GM23248 (cell line): ENCODE measurements at regions of chr4 and their contacts with region 1.

Region 1: DNA sequence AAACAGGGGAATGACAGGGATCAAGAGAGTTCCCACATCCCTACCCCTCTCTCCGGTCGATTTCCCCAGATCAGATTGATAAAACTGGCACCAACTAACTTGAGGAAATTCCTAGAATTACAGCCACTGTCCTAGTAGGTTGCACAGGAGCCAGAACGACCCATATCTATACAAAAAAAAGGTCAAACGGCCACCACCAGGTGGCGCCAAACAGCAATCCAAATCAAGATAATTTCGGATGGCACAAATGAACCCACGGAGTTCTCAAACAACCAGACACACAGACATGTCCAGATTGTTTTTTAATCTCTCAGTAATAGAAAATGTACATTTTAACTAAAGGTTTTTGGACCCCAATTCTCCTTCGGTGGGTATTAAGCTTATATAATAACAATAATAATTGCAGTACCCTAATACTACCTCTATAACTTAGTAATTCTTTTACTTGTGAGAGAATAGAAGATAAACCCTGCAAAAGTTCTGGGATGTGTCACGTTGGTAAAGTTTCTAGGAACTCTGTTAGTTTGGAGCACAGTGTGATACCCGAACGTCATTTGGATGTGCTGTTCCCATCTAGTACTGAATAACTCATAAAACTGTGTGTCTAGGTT is 212.6 kb downstream of the SPOCK3 start:
- DNase-seq: peak; percentile 60
- H3K4me3 ChIP-seq: no peak overlapping the region
- H3K27ac ChIP-seq: no peak overlapping the region
- H3K4me1 ChIP-seq: no peaks in the 10 kb centered on the region
- H3K27me3 ChIP-seq: no peaks in the 10 kb centered on the region

Region 2: GRCh38 chr4:165986956-165987698 is 1034.5 kb before region 1 on chr4:
- in situ Hi-C with region 1: no loop called
- DNase-seq: no peak
- H3K4me3 ChIP-seq: no peak overlapping the region
- H3K27ac ChIP-seq: no peak overlapping the region
- H3K4me1 ChIP-seq: no peaks in the 10 kb centered on the region
- H3K27me3 ChIP-seq: no peaks in the 10 kb centered on the region

Region 3: GRCh38 chr4:166913926-166914325 is 107.7 kb before region 1 on chr4:
- in situ Hi-C with region 1: no loop called
- DNase-seq: no peak
- H3K4me3 ChIP-seq: no peak overlapping the region
- H3K27ac ChIP-seq: no peak overlapping the region
- H3K4me1 ChIP-seq: no peaks in the 10 kb centered on the region
- H3K27me3 ChIP-seq: no peaks in the 10 kb centered on the region

Region 4: DNA sequence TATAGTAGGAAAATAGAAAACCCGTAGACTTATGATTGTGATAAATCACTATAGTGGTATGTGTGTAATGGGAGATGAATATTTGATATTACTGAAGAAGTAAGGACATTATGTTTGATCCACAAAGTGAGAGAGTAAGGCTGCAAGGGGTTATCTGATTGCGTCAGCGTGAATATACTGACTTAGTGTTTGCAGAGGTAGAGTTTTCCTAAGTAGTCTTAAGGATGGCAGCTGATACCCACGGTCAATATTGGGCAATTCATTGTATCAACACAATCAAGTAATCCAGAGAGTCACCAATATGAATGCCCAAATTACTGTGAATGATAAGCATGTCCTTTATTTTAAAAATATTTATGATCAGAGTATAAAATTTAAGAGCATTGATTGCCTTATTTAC is 128.9 kb after region 1 on chr4:
- in situ Hi-C with region 1: no loop called
- DNase-seq: no peak
- H3K4me3 ChIP-seq: no peak overlapping the region
- H3K27ac ChIP-seq: no peak overlapping the region
- H3K4me1 ChIP-seq: no peaks in the 10 kb centered on the region
- H3K27me3 ChIP-seq: no peaks in the 10 kb centered on the region

Region 5: GRCh38 chr4:167196344-167197012 is 174.8 kb after region 1 on chr4:
- in situ Hi-C with region 1: no loop called
- DNase-seq: no peak
- H3K4me3 ChIP-seq: no peak overlapping the region
- H3K27ac ChIP-seq: no peak overlapping the region
- H3K4me1 ChIP-seq: no peaks in the 10 kb centered on the region
- H3K27me3 ChIP-seq: no peaks in the 10 kb centered on the region

Region 6: DNA sequence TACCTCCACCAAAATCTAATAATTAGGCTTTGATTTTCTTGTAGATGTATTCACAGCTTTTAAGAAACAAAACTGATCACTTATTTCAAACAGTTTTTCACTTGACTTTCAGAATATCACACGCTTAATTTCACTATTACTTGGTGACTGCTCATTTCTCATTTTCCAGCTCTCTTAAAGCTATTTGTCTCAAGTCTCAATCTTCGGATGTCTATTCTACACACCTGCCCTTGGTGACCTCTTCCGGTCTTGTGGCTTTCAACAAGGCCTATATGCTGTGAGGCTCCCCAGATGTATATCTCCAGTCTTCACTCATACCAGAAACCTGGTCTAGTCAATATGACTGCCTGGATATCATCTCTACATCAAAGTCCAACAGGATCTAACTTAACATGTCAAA is 1035.8 kb after region 1 on chr4:
- in situ Hi-C with region 1: loop called (anchors 25 kb)
- DNase-seq: no peak
- H3K4me3 ChIP-seq: no peak overlapping the region
- H3K27ac ChIP-seq: no peak overlapping the region
- H3K4me1 ChIP-seq: 0 out of 2 replicates have a peak, but pooled peaks cover 10% of the 10 kb centered on the region
- H3K27me3 ChIP-seq: peaks cover 18% of the 10 kb centered on the region